HCT116 (cell line): ENCODE measurements at regions of chr5 and their contacts with region 1.

Region 1: DNA sequence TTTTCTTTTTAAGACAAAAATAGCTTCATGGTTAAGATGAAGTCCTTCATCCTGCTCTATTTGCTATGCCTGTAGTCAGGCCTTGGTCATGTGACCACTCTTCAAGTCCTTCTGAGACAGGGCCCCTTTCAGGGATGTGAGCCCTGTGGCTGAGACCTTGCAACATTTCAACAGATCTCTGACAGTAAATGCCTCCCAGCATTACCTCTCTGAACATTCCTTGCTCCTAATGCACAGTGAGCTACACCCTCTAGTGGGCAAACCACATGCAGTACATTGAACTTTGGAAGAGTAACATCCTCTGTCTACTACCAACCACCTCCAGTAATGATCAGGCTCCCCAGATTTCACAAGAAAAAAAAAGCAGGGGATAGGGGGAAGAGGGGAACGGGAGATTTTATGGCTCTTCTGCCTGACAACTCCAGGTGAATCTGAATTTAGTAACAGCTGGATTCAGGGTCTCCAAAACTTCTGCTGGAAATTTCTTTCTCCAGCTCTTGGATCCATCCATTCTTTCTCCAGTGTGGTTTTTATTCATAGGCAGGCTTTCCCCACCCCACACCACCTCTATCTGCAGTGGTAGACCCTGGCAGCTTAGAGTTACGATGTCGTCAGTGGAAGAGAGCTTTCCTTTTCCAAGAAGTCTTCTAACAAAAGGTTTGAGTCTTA is 8.9 kb upstream of the FBXO38 start:
- DNase-seq: peak; percentile 45
- ATAC-seq: peak; percentile 98
- H3K4me3 ChIP-seq: no peak overlapping the region
- H3K27ac ChIP-seq: no peak overlapping the region
- H3K4me1 ChIP-seq: no peaks in the 10 kb centered on the region
- H3K27me3 ChIP-seq: no peaks in the 10 kb centered on the region
- CTCF ChIP-seq: peak; percentile 62 to 85 (median 81)
- POLR2A ChIP-seq: no peak
- RAD21 ChIP-seq: peak; percentile 81

Region 2: GRCh38 chr5:147949711-147950573 is 424.9 kb before region 1 on chr5:
- CTCF ChIA-PET with region 1: interaction called, 4 read pairs
- POLR2A ChIA-PET with region 1: no interaction called
- RAD21 ChIA-PET with region 1: no interaction called
- intact Hi-C with region 1: loop called (anchors 1 kb)
- DNase-seq: peak; percentile 33
- ATAC-seq: peak; percentile 87
- H3K4me3 ChIP-seq: no peak overlapping the region
- H3K27ac ChIP-seq: no peak overlapping the region
- H3K4me1 ChIP-seq: no peaks in the 10 kb centered on the region
- H3K27me3 ChIP-seq: no peaks in the 10 kb centered on the region
- CTCF ChIP-seq: peak; percentile 50 to 79 (median 77); a peak in 5 of 6 replicates
- POLR2A ChIP-seq: no peak
- RAD21 ChIP-seq: peak; percentile 78

Region 3: GRCh38 chr5:148179234-148179824 is 195.5 kb before region 1 on chr5:
- CTCF ChIA-PET with region 1: interaction called, 6 read pairs
- POLR2A ChIA-PET with region 1: no interaction called
- RAD21 ChIA-PET with region 1: no interaction called
- intact Hi-C with region 1: loop called (anchors 1 kb)
- DNase-seq: peak; percentile 48
- ATAC-seq: peak; percentile 78
- H3K4me3 ChIP-seq: no peak overlapping the region
- H3K27ac ChIP-seq: no peak overlapping the region
- H3K4me1 ChIP-seq: no peaks in the 10 kb centered on the region
- H3K27me3 ChIP-seq: no peaks in the 10 kb centered on the region
- CTCF ChIP-seq: peak; percentile 62 to 76 (median 72)
- POLR2A ChIP-seq: no peak
- RAD21 ChIP-seq: peak; percentile 84

Region 4: GRCh38 chr5:148290271-148291195 is 84.3 kb before region 1 on chr5:
- CTCF ChIA-PET with region 1: interaction called, 11 read pairs
- POLR2A ChIA-PET with region 1: no interaction called
- RAD21 ChIA-PET with region 1: no interaction called
- intact Hi-C with region 1: loop called (anchors 1 kb)
- DNase-seq: peak; percentile 4
- ATAC-seq: peak; percentile 80
- H3K4me3 ChIP-seq: no peak overlapping the region
- H3K27ac ChIP-seq: no peak overlapping the region
- H3K4me1 ChIP-seq: no peaks in the 10 kb centered on the region
- H3K27me3 ChIP-seq: peaks cover 20% of the 10 kb centered on the region; the same call in 1 of the 2 replicates
- CTCF ChIP-seq: peak; percentile 39 to 57 (median 49); a peak in 5 of 6 replicates
- POLR2A ChIP-seq: no peak
- RAD21 ChIP-seq: peak; percentile 67

Region 5: DNA sequence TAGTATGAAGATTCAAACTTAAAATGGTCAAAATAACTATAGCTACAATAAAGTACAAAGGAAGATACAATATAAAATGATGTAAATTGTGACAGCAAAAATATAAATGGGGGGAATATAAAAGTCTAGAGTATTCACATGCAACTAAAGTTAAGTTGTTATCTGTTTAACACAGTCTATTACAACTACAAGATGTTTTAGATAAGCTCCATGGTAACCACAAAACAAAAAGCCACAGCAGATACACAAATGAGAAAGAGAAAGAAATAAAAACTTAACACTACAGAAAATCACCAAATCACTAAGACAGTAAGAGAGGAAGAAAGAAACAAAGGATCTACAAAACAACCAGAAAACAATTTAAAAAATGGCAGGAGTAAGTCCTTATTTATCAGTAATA is 705.1 kb after region 1 on chr5:
- CTCF ChIA-PET with region 1: no interaction called
- POLR2A ChIA-PET with region 1: no interaction called
- RAD21 ChIA-PET with region 1: no interaction called
- intact Hi-C with region 1: no loop called
- DNase-seq: no peak
- ATAC-seq: no peak
- H3K4me3 ChIP-seq: no peak overlapping the region
- H3K27ac ChIP-seq: no peak overlapping the region
- H3K4me1 ChIP-seq: no peaks in the 10 kb centered on the region; a peak in 1 of 4 replicates
- H3K27me3 ChIP-seq: no peaks in the 10 kb centered on the region
- CTCF ChIP-seq: no peak
- POLR2A ChIP-seq: no peak
- RAD21 ChIP-seq: no peak

Region 6: GRCh38 chr5:149422366-149423048 is 1047.7 kb after region 1 on chr5:
- CTCF ChIA-PET with region 1: no interaction called
- POLR2A ChIA-PET with region 1: no interaction called
- RAD21 ChIA-PET with region 1: no interaction called
- intact Hi-C with region 1: no loop called
- DNase-seq: no peak
- ATAC-seq: no peak
- H3K4me3 ChIP-seq: no peak overlapping the region
- H3K27ac ChIP-seq: no peak overlapping the region
- H3K4me1 ChIP-seq: peaks cover 7 to 25% of the 10 kb centered on the region in 2 experiments; a peak in 3 of 4 replicates
- H3K27me3 ChIP-seq: no peaks in the 10 kb centered on the region
- CTCF ChIP-seq: no peak
- POLR2A ChIP-seq: no peak
- RAD21 ChIP-seq: no peak